CD4-positive, alpha-beta T cell (primary cell): ENCODE measurements at regions of chr1 and their contacts with region 1.

Region 1: GRCh38 chr1:65812065-65812464 is 19.4 kb downstream of the PDE4B start:
- DNase-seq: peak in 3 of 14 experiments; percentile 48 to 72 (median 61)
- ATAC-seq: no peak
- H3K4me3 ChIP-seq: no peak overlapping the region
- H3K4me3 Mint-ChIP-seq: no peak overlapping the region
- H3K27ac ChIP-seq: no peak overlapping the region
- H3K27ac Mint-ChIP-seq: no peak overlapping the region
- H3K4me1 ChIP-seq: peaks cover 4% of the 10 kb centered on the region
- H3K4me1 Mint-ChIP-seq: peaks cover 5% of the 10 kb centered on the region
- H3K27me3 ChIP-seq: peaks cover 6% of the 10 kb centered on the region in 2 experiments
- H3K27me3 Mint-ChIP-seq: peaks cover 27% of the 10 kb centered on the region
- CTCF ChIP-seq: no peak

Region 2: DNA sequence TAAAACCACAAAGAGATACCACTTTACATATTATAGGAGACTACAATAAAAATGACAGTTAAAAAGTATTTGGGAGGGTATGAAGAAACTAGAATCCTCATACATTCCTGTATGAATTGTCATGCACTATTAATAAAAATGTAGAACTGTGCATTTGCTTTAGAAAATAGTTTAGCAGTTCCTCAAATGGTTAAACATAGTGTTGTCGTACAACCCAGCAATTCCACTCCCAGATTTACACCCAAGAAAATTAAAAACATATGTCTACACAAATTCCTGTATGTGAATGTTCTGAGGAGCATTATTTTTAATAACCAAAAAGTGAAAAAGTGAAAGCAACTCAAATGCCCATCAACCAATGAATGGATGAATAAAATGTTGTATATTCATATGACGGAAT is 42.4 kb before region 1 on chr1:
- CTCF ChIA-PET with region 1: no interaction called
- POLR2A ChIA-PET with region 1: no interaction called
- intact Hi-C with region 1: loop called in 1 of 2 experiments (anchors 1 kb)
- DNase-seq: no peak
- ATAC-seq: no peak
- H3K4me3 ChIP-seq: no peak overlapping the region
- H3K4me3 Mint-ChIP-seq: no peak overlapping the region
- H3K27ac ChIP-seq: no peak overlapping the region
- H3K27ac Mint-ChIP-seq: no peak overlapping the region
- H3K4me1 ChIP-seq: no peaks in the 10 kb centered on the region
- H3K4me1 Mint-ChIP-seq: no peaks in the 10 kb centered on the region
- H3K27me3 ChIP-seq: peaks cover 0 to 2% of the 10 kb centered on the region in 2 experiments
- H3K27me3 Mint-ChIP-seq: peaks cover 8% of the 10 kb centered on the region
- CTCF ChIP-seq: no peak

Region 3: GRCh38 chr1:65799601-65800000 is 12.5 kb before region 1 on chr1:
- CTCF ChIA-PET with region 1: no interaction called
- POLR2A ChIA-PET with region 1: no interaction called
- intact Hi-C with region 1: no loop called
- DNase-seq: no peak
- ATAC-seq: no peak
- H3K4me3 ChIP-seq: no peak overlapping the region
- H3K4me3 Mint-ChIP-seq: no peak overlapping the region
- H3K27ac ChIP-seq: no peak overlapping the region
- H3K27ac Mint-ChIP-seq: no peak overlapping the region
- H3K4me1 ChIP-seq: no peaks in the 10 kb centered on the region
- H3K4me1 Mint-ChIP-seq: no peaks in the 10 kb centered on the region
- H3K27me3 ChIP-seq: peaks cover 6 to 10% of the 10 kb centered on the region in 2 experiments
- H3K27me3 Mint-ChIP-seq: peaks cover 30% of the 10 kb centered on the region
- CTCF ChIP-seq: no peak

Region 4: GRCh38 chr1:66413136-66413837 is 601.2 kb after region 1 on chr1:
- CTCF ChIA-PET with region 1: no interaction called
- POLR2A ChIA-PET with region 1: no interaction called
- intact Hi-C with region 1: no loop called
- DNase-seq: no peak
- ATAC-seq: no peak
- H3K4me3 ChIP-seq: no peak overlapping the region
- H3K4me3 Mint-ChIP-seq: no peak overlapping the region
- H3K27ac ChIP-seq: no peak overlapping the region
- H3K27ac Mint-ChIP-seq: no peak overlapping the region
- H3K4me1 ChIP-seq: no peaks in the 10 kb centered on the region
- H3K4me1 Mint-ChIP-seq: peaks cover 27% of the 10 kb centered on the region
- H3K27me3 ChIP-seq: no peaks in the 10 kb centered on the region
- H3K27me3 Mint-ChIP-seq: no peaks in the 10 kb centered on the region
- CTCF ChIP-seq: no peak